GM23248 (cell line): ENCODE measurements at regions of chr14 and their contacts with region 1.

Region 1: DNA sequence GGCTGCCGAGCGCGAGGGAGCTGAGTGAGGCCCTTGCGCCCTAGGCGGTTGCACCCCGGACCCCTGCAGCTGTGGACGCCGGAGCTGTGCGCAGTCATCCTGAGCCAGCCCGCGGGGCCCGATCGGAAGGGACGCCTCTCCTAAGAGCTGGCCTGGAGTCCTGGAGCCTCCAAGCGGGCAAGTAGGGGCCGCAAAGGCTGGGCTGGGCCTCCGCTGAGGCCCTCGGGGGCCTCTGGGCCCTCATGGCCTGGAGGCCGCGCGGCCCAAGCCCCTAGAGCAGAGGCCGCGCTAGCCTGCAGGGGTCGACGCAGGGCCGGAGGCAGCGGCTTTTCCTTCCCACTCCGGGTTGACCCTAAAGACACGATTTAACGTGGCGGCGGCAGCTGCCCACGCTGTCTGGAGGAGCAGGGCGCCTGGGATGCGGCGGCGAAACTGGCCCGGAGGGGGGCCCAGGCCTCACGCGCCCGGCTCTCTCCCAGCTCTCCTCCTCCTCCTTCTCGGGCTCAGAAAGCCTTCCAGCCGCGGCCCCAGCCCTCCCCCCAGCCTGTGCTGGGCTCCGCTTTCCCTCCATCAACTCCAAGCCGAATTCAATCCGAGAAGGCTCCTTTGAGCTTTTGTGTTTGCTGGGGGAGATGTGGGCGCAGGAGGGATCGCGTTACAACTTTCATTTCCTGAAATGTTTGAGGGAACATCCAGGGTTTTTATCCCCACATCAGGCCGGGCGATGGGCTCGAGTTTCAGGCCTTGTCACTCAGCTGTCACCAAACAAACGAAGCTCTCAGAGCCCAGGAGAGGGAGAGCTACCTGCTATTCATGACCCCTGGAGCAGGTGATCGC is 11.6 kb downstream of the SIX1 start:
- DNase-seq: peak; percentile 69
- H3K4me3 ChIP-seq: peak overlapping the region; percentile 51
- H3K27ac ChIP-seq: peak overlapping the region; percentile 2
- H3K4me1 ChIP-seq: peaks cover 4% of the 10 kb centered on the region
- H3K27me3 ChIP-seq: no peaks in the 10 kb centered on the region

Region 2: DNA sequence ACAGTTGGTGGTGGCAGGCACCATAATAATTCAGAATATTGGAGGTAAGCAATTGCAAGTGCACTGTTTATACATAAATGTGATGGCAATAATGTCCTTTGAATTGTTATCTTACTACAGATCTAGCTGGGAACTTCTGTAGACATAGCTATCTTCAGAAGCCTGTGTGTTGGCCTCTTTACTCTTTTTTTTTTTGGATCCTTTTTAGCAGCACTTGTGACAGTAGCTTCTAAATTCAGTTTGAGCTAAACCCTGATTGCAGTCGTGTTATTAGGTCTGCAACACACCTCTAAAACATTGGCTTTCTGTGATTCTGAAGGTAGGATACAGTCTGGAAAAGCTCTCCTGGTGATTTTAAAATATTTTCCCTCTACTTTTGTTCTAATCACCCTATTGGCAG is 381.8 kb after region 1 on chr14:
- in situ Hi-C with region 1: loop called (anchors 10 kb)
- DNase-seq: no peak
- H3K4me3 ChIP-seq: no peak overlapping the region
- H3K27ac ChIP-seq: no peak overlapping the region
- H3K4me1 ChIP-seq: no peaks in the 10 kb centered on the region
- H3K27me3 ChIP-seq: no peaks in the 10 kb centered on the region